Vagina (tissue), 2 donors: ENCODE measurements at regions of chr18 and their contacts with region 1.

Region 1: GRCh38 chr18:10973567-10974203 is 175.7 kb downstream of the PIEZO2 start:
- DNase-seq: no peak
- H3K4me3 ChIP-seq: no peak overlapping the region
- H3K27ac ChIP-seq: no peak overlapping the region
- H3K4me1 ChIP-seq: no peaks in the 10 kb centered on the region
- H3K27me3 ChIP-seq: no peaks in the 10 kb centered on the region
- CTCF ChIP-seq: no peak
- POLR2A ChIP-seq: no peak

Region 2: GRCh38 chr18:11034884-11035283 is 61.2 kb after region 1 on chr18:
- intact Hi-C with region 1: loop called (anchors 10 kb)
- DNase-seq: no peak
- H3K4me3 ChIP-seq: no peak overlapping the region
- H3K27ac ChIP-seq: no peak overlapping the region
- H3K4me1 ChIP-seq: no peaks in the 10 kb centered on the region
- H3K27me3 ChIP-seq: no peaks in the 10 kb centered on the region
- CTCF ChIP-seq: no peak
- POLR2A ChIP-seq: no peak